ENCODE measurements at regions of chr7 and their contacts with region 1.

Region 1: DNA sequence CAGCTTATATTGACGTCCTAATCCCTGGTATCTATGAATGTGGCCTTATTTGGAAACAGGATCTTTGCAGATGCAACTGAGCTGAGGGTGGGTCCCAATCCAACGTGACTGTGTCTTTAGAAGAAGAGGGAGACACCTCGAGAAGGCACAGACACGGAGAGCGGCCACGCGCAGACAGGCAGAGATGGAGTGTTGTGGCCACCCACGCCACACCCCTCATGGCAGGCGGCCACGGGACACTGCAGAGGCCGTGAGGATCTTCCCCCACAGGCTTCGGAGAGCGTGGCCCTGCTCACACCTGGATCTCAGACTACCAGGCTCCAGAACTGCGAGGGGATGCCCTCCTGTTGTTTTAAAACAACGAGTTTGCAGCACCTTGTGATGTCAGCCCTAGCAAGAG is 244.9 kb downstream of the DNAJB6 start:
- DNase-seq: peak; percentile 77

Region 2: GRCh38 chr7:157565981-157566633 is 15.6 kb before region 1 on chr7:
- intact Hi-C with region 1: loop called in 1 of 2 experiments (anchors 2 kb)
- DNase-seq: peak; percentile 57

Measured in posterior vena cava (tissue), 2 donors.